ENCODE measurements at regions of chr14 and their contacts with region 1.

Region 1: GRCh38 chr14:65164068-65164824 is 61.9 kb upstream of the MAX start:
- DNase-seq: peak; percentile 61
- ATAC-seq: peak; percentile 79
- H3K4me3 ChIP-seq: no peak overlapping the region
- H3K27ac ChIP-seq: no peak overlapping the region
- H3K4me1 ChIP-seq: peaks cover 5% of the 10 kb centered on the region
- H3K27me3 ChIP-seq: no peaks in the 10 kb centered on the region
- CTCF ChIP-seq: peak; percentile 86
- POLR2A ChIP-seq: 0 out of 2 replicates have a peak, but pooled peaks have one; percentile 36
- RAD21 ChIP-seq: peak; percentile 94

Region 2: GRCh38 chr14:63727774-63728728 is 1436.2 kb before region 1 on chr14 and contains the start of gene SGPP1:
- CTCF ChIA-PET with region 1: no interaction called
- POLR2A ChIA-PET with region 1: no interaction called
- dilution Hi-C with region 1: no loop called
- in situ Hi-C with region 1: no loop called
- intact Hi-C with region 1: no loop called
- DNase-seq: peak; percentile 55
- ATAC-seq: peak; percentile 95
- H3K4me3 ChIP-seq: peak within 1 kb of the TSS; percentile 100
- H3K27ac ChIP-seq: peak within 1 kb of the TSS; percentile 81
- H3K4me1 ChIP-seq: no peaks in the 10 kb centered on the region
- H3K27me3 ChIP-seq: no peaks in the 10 kb centered on the region; the same call in 1 of the 2 replicates
- CTCF ChIP-seq: peak; percentile 31
- POLR2A ChIP-seq: peak; percentile 53; the same call in 1 of the 2 replicates
- RAD21 ChIP-seq: no peak; the same call in none of the 2 replicates
- total RNA-seq, gene SGPP1: 11.1 and 23.1 TPM in 2 replicates

Region 3: GRCh38 chr14:64178814-64179213 is 985.4 kb before region 1 on chr14:
- CTCF ChIA-PET with region 1: no interaction called
- POLR2A ChIA-PET with region 1: no interaction called
- dilution Hi-C with region 1: no loop called
- in situ Hi-C with region 1: no loop called
- intact Hi-C with region 1: no loop called
- DNase-seq: no peak
- ATAC-seq: no peak
- H3K4me3 ChIP-seq: no peak overlapping the region
- H3K27ac ChIP-seq: no peak overlapping the region
- H3K4me1 ChIP-seq: 0 out of 2 replicates have a peak, but pooled peaks cover 2% of the 10 kb centered on the region
- H3K27me3 ChIP-seq: no peaks in the 10 kb centered on the region
- CTCF ChIP-seq: no peak
- POLR2A ChIP-seq: no peak
- RAD21 ChIP-seq: no peak

Region 4: DNA sequence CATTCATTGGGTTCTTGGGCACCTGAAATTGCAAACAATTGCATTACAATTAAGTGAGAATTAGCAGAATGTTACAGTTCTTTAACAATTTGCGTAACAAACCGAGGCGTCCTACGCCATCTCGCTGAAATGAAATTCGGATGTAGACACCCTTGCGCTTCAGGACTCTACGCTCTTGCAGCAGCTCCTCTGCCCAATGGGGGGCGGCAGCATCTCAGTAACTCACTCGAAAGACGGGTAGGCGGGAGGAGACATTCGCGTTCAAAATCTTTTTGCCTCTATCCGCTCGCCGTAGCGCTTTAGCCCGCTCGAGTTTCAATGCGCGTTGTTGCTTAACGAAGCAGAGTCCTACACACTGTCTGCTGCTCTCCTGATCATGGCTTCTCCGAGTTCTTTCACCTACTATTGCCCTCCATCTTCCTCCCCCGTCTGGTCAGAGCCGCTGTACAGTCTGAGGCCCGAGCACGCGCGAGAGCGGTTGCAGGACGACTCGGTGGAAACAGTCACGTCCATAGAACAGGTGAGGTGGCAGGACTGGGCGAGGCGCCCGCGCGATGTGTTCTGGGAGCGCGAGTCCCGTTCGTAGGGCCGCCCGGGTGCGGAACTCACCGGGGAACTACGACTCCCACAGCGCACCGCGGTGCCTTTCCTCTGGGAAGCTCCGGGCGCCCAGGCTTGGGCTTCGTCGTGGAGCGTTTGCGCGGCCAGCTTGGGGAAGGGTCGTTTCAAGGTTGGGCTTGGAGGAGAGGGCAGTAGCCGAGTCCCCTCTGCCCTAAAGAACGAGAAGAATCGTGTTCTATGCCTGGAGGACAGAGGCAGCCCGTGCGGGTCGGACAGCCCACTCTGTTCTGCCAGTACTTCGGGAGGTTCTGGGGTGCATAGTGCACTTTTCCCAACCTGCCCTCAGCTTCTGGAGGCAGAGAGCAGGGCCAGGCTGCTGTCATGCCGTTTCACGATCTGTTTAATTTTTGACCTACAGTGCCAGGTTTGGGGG is 177.4 kb before region 1 on chr14 and contains the start of gene FNTB:
- CTCF ChIA-PET with region 1: no interaction called
- POLR2A ChIA-PET with region 1: no interaction called
- dilution Hi-C with region 1: no loop called
- in situ Hi-C with region 1: no loop called
- intact Hi-C with region 1: loop called (anchors 5 kb)
- DNase-seq: peak; percentile 97
- ATAC-seq: peak; percentile 96
- H3K4me3 ChIP-seq: peak within 1 kb of the TSS; percentile 58
- H3K27ac ChIP-seq: peak within 1 kb of the TSS; percentile 77
- H3K4me1 ChIP-seq: 0 out of 2 replicates have a peak, but pooled peaks cover 1% of the 10 kb centered on the region
- H3K27me3 ChIP-seq: peaks cover 2% of the 10 kb centered on the region; the same call in 1 of the 2 replicates
- CTCF ChIP-seq: peak; percentile 98
- POLR2A ChIP-seq: peak; percentile 21; the same call in 1 of the 2 replicates
- RAD21 ChIP-seq: peak; percentile 91
- total RNA-seq, gene FNTB: 8.1 and 9.9 TPM in 2 replicates

Region 5: DNA sequence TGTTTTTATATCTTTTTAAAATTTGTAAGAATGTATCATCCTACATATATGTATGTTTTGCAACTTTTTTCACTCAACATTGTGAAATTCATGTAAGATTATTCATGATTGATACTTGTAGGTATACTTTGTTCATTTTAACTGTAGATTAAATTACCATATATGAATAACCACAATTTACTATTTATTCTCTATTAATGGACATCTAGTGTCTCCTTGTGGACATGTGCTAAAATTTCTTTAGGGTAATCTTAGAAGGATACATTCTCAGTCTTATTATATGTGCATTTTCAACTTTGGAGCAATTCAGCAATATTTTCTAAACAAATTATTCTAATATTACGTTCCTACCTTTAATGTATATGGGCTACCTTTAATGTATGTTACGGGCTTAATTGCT is 440.7 kb after region 1 on chr14:
- CTCF ChIA-PET with region 1: no interaction called
- POLR2A ChIA-PET with region 1: no interaction called
- dilution Hi-C with region 1: no loop called
- in situ Hi-C with region 1: loop called (anchors 25 kb)
- intact Hi-C with region 1: loop called (anchors 2 kb)
- DNase-seq: peak; percentile 13
- ATAC-seq: no peak
- H3K4me3 ChIP-seq: no peak overlapping the region
- H3K27ac ChIP-seq: no peak overlapping the region
- H3K4me1 ChIP-seq: no peaks in the 10 kb centered on the region
- H3K27me3 ChIP-seq: no peaks in the 10 kb centered on the region
- CTCF ChIP-seq: peak; percentile 44
- POLR2A ChIP-seq: no peak
- RAD21 ChIP-seq: peak; percentile 47

Region 6: GRCh38 chr14:65824285-65824977 is 660.2 kb after region 1 on chr14:
- CTCF ChIA-PET with region 1: interaction called, 15 read pairs
- POLR2A ChIA-PET with region 1: no interaction called
- dilution Hi-C with region 1: no loop called
- in situ Hi-C with region 1: loop called (anchors 5 kb)
- intact Hi-C with region 1: loop called (anchors 1 kb)
- DNase-seq: peak; percentile 70
- ATAC-seq: peak; percentile 99
- H3K4me3 ChIP-seq: no peak overlapping the region
- H3K27ac ChIP-seq: no peak overlapping the region
- H3K4me1 ChIP-seq: no peaks in the 10 kb centered on the region
- H3K27me3 ChIP-seq: peaks cover 48% of the 10 kb centered on the region
- CTCF ChIP-seq: peak; percentile 86
- POLR2A ChIP-seq: no peak
- RAD21 ChIP-seq: peak; percentile 82

Region 7: DNA sequence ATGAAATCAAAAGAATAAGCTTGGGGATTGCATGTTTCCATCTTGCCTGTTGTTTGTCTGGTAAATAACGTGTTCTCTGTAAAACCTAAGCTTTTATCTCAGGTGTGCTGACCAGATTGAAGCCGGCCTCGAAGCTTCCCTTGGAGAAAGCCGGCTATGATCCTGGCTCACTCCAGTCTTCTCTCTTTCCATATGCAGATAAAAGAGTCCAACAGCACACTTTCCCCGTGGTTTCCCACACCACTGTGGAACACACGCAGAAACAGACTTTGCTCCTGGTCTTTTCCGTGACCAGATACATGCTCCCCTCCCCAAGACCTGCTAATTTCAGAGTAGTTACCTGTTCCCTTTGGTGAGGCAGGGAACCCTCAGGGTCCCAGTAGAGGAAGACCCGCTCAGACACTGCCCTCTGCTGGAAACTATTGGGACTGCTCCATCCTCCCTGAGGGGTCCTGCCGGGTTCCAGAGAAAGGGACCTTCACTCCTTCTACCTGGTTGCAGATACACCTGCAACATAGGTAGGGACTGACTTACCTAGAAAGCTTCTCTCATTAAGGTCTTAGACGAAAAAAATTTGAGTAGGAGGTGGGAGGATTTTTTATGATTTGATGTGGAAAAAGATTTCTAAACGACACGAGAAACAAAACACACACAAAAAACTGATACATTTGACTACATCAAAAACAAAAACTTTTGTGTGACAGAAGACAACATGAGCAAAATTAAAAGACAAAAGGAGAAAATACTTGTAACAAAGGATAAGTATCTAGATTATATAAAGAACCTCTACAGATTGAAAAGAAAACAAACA is 906.5 kb after region 1 on chr14:
- CTCF ChIA-PET with region 1: no interaction called
- POLR2A ChIA-PET with region 1: no interaction called
- dilution Hi-C with region 1: no loop called
- in situ Hi-C with region 1: loop called (anchors 25 kb)
- intact Hi-C with region 1: loop called (anchors 5 kb)
- DNase-seq: no peak
- ATAC-seq: no peak
- H3K4me3 ChIP-seq: no peak overlapping the region
- H3K27ac ChIP-seq: no peak overlapping the region
- H3K4me1 ChIP-seq: no peaks in the 10 kb centered on the region
- H3K27me3 ChIP-seq: no peaks in the 10 kb centered on the region
- CTCF ChIP-seq: peak; percentile 51
- POLR2A ChIP-seq: no peak
- RAD21 ChIP-seq: peak; percentile 48

Region 8: GRCh38 chr14:66359500-66359899 is 1195.3 kb after region 1 on chr14:
- CTCF ChIA-PET with region 1: no interaction called
- POLR2A ChIA-PET with region 1: no interaction called
- dilution Hi-C with region 1: no loop called
- in situ Hi-C with region 1: no loop called
- intact Hi-C with region 1: loop called (anchors 5 kb)
- DNase-seq: peak; percentile 64
- ATAC-seq: peak; percentile 40; the same call in 1 of the 2 replicates
- H3K4me3 ChIP-seq: no peak overlapping the region
- H3K27ac ChIP-seq: no peak overlapping the region
- H3K4me1 ChIP-seq: no peaks in the 10 kb centered on the region
- H3K27me3 ChIP-seq: no peaks in the 10 kb centered on the region
- CTCF ChIP-seq: peak; percentile 67
- POLR2A ChIP-seq: no peak
- RAD21 ChIP-seq: peak; percentile 62

Region 9: GRCh38 chr14:66507722-66508546 is 1343.7 kb after region 1 on chr14 and contains the start of gene GPHN:
- CTCF ChIA-PET with region 1: no interaction called
- POLR2A ChIA-PET with region 1: no interaction called
- dilution Hi-C with region 1: no loop called
- in situ Hi-C with region 1: no loop called
- intact Hi-C with region 1: loop called (anchors 10 kb)
- DNase-seq: peak; percentile 97
- ATAC-seq: peak; percentile 97
- H3K4me3 ChIP-seq: peak within 1 kb of the TSS; percentile 96
- H3K27ac ChIP-seq: peak within 1 kb of the TSS; percentile 34
- H3K4me1 ChIP-seq: no peaks in the 10 kb centered on the region
- H3K27me3 ChIP-seq: no peaks in the 10 kb centered on the region
- CTCF ChIP-seq: peak; percentile 25; the same call in 1 of the 2 replicates
- POLR2A ChIP-seq: no peak; the same call in 1 of the 2 replicates
- RAD21 ChIP-seq: no peak
- total RNA-seq, gene GPHN: 7.2 and 8.1 TPM in 2 replicates

Measured in IMR-90 (cell line).